GM12878 (cell line): ENCODE measurements at regions of chr11 and their contacts with region 1.

Region 1: DNA sequence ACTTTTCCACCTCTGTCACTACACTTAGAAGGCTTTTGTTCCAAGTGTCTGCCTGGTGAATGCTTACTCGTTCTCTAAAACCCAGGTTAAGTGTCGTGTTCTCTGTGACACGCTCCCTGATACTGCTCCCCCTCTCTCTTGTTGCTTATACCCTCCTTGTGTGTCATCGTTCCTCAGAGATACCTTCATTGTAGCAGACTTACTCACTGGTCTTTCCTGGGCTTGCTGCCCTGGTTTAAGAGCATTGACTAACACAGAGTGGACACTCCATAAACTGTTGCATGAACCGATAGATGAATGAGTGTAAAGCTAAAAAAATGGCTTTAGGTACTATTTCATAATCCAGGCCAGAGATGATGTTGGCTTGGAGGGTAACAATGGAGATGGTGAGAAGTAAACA is 171.3 kb downstream of the GRIK4 start:
- DNase-seq: no peak
- ATAC-seq: no peak
- H3K4me3 ChIP-seq: no peak overlapping the region
- H3K27ac ChIP-seq: no peak overlapping the region
- H3K4me1 ChIP-seq: no peaks in the 10 kb centered on the region; the same call in 1 of the 2 replicates
- H3K27me3 ChIP-seq: no peaks in the 10 kb centered on the region
- CTCF ChIP-seq: no peak
- EP300 ChIP-seq: no peak
- POLR2A ChIP-seq: no peak
- RAD21 ChIP-seq: no peak

Region 2: GRCh38 chr11:120511116-120511819 is 171.6 kb before region 1 on chr11 and contains the start of gene GRIK4:
- CTCF ChIA-PET with region 1: interaction called, 95 read pairs
- POLR2A ChIA-PET with region 1: no interaction called
- RAD21 ChIA-PET with region 1: interaction called, 64 read pairs
- SMC1A ChIA-PET with region 1: interaction called, 32 read pairs
- in situ Hi-C with region 1: loop called (anchors 10 kb)
- intact Hi-C with region 1: loop called (anchors 1 kb)
- DNase-seq: no peak
- ATAC-seq: peak; percentile 95
- H3K4me3 ChIP-seq: peak within 1 kb of the TSS; percentile 16; the same call in 1 of the 2 replicates
- H3K27ac ChIP-seq: no peak within 1 kb of the TSS
- H3K4me1 ChIP-seq: no peaks in the 10 kb centered on the region; the same call in 1 of the 2 replicates
- H3K27me3 ChIP-seq: no peaks in the 10 kb centered on the region
- CTCF ChIP-seq: peak; percentile 88 to 98 (median 92)
- EP300 ChIP-seq: no peak
- POLR2A ChIP-seq: no peak
- RAD21 ChIP-seq: peak; percentile 99
- polyA plus RNA-seq, gene GRIK4: 0.33 to 0.45 TPM

Region 3: DNA sequence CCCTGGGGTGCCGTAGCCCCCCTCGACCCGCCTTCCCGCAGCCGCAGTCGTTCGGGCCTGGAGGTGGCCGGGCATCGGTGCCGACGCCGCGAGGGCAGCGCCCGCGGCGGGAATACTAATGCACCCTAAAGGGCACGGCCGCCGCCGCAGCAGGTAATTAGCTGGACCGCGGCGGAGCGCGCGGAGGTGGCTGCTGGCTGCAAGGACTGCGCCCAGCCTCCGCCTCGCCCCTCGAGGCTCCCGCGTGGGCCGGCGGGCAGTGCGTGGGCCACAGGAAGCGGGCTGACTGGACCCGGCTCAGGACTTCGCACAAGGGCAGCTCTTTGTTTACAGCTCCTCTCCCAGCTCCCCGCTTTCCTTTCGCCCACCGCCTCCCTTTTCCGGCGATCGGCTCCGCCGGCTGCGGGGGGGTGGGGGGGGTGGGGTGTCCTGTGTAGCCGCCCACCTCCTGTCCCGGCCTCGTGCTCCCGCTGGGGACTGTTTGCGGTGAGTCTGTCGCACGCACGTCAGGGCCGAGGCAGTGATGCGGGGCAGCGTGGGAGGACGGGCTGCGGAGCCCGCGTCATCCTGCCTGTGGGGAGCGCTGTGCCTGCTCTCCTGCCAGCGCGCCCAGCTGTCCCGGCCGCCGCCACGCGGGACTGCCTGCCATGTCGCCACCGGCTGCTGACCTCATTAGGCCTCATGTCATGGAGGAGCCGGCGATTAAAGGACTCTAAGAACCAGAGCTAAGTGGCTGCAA is 118.1 kb before region 1 on chr11:
- CTCF ChIA-PET with region 1: interaction called, 38 read pairs
- POLR2A ChIA-PET with region 1: no interaction called
- RAD21 ChIA-PET with region 1: interaction called, 14 read pairs
- SMC1A ChIA-PET with region 1: interaction called, 11 read pairs
- in situ Hi-C with region 1: no loop called
- intact Hi-C with region 1: no loop called
- DNase-seq: peak; percentile 49
- ATAC-seq: peak; percentile 90
- H3K4me3 ChIP-seq: peak overlapping the region; percentile 47; the same call in 1 of the 2 replicates
- H3K27ac ChIP-seq: peak overlapping the region; percentile 35
- H3K4me1 ChIP-seq: peaks cover 18% of the 10 kb centered on the region
- H3K27me3 ChIP-seq: no peaks in the 10 kb centered on the region
- CTCF ChIP-seq: peak; percentile 21 to 44 (median 37); a peak in 3 of 6 replicates
- EP300 ChIP-seq: peak; percentile 85 to 94
- POLR2A ChIP-seq: no peak
- RAD21 ChIP-seq: peak; percentile 9; the same call in 1 of the 2 replicates

Region 4: GRCh38 chr11:120632579-120632978 is 50.3 kb before region 1 on chr11:
- CTCF ChIA-PET with region 1: interaction called, 36 read pairs
- POLR2A ChIA-PET with region 1: no interaction called
- RAD21 ChIA-PET with region 1: interaction called, 27 read pairs
- SMC1A ChIA-PET with region 1: interaction called, 33 read pairs
- in situ Hi-C with region 1: no loop called
- intact Hi-C with region 1: loop called (anchors 5 kb)
- DNase-seq: no peak
- ATAC-seq: peak; percentile 87
- H3K4me3 ChIP-seq: no peak overlapping the region
- H3K27ac ChIP-seq: no peak overlapping the region
- H3K4me1 ChIP-seq: peaks cover 10% of the 10 kb centered on the region
- H3K27me3 ChIP-seq: no peaks in the 10 kb centered on the region
- CTCF ChIP-seq: peak; percentile 16 to 64 (median 62)
- EP300 ChIP-seq: no peak
- POLR2A ChIP-seq: no peak
- RAD21 ChIP-seq: peak; percentile 60

Region 5: DNA sequence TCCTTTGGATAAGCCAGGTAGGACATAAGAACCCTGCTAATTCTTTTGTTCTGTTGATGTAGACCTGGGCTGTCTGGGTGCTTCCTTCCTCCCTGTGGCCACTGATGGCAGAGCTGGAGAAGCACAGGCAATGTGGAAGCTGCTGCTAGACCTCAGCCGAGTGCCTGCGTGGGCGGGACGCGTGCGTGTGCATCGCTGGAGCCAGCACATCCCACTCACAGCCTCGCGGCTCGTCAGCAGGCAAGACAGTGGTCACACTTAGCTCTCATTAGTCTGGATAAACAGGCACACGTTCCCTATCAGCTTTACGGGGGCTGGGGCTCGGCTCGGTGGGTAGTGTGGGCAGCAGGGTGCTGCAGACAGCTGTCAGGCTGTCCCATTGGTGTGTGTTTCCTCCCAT is 15.6 kb before region 1 on chr11:
- CTCF ChIA-PET with region 1: interaction called, 111 read pairs
- POLR2A ChIA-PET with region 1: no interaction called
- RAD21 ChIA-PET with region 1: interaction called, 9 read pairs
- SMC1A ChIA-PET with region 1: interaction called, 6 read pairs
- in situ Hi-C with region 1: no loop called
- intact Hi-C with region 1: no loop called
- DNase-seq: no peak
- ATAC-seq: no peak; the same call in 2 of the 3 replicates
- H3K4me3 ChIP-seq: no peak overlapping the region
- H3K27ac ChIP-seq: no peak overlapping the region
- H3K4me1 ChIP-seq: no peaks in the 10 kb centered on the region
- H3K27me3 ChIP-seq: no peaks in the 10 kb centered on the region; a peak in 1 of 4 replicates
- CTCF ChIP-seq: no peak
- EP300 ChIP-seq: no peak
- POLR2A ChIP-seq: no peak
- RAD21 ChIP-seq: no peak

Region 6: GRCh38 chr11:120710354-120711131 is 27.7 kb after region 1 on chr11:
- CTCF ChIA-PET with region 1: interaction called, 86 read pairs
- POLR2A ChIA-PET with region 1: no interaction called
- RAD21 ChIA-PET with region 1: interaction called, 13 read pairs
- SMC1A ChIA-PET with region 1: interaction called, 23 read pairs
- in situ Hi-C with region 1: no loop called
- intact Hi-C with region 1: no loop called
- DNase-seq: no peak
- ATAC-seq: peak; percentile 45
- H3K4me3 ChIP-seq: peak overlapping the region; percentile 12; the same call in 1 of the 2 replicates
- H3K27ac ChIP-seq: peak overlapping the region; percentile 63
- H3K4me1 ChIP-seq: peaks cover 47% of the 10 kb centered on the region
- H3K27me3 ChIP-seq: no peaks in the 10 kb centered on the region
- CTCF ChIP-seq: no peak
- EP300 ChIP-seq: no peak
- POLR2A ChIP-seq: no peak
- RAD21 ChIP-seq: no peak

Region 7: DNA sequence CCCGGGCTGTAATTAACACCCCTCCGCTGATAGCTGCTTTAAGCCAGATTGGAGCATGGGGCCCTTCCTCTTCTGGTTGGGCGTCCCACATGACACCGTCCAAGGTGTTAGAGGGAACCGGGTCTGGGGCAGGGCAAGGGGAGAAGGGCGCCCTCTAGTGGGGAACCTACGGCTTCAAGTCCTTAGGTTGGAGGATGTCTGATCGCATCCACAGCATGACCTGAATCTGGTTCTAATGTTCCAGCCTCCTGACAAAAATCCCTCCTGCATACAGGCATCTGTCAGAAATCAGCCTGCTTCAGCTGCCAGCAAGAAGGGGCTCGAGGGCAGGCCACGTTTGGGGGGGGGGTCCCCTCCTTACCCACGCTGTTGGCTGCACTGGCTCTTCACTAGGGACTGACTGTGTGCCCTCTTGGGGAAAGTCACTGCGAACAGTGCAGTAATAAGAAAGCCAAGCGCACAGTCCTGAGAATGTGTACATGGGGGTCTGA is 246.8 kb after region 1 on chr11:
- CTCF ChIA-PET with region 1: interaction called, 13 read pairs
- POLR2A ChIA-PET with region 1: no interaction called
- RAD21 ChIA-PET with region 1: interaction called, 11 read pairs
- SMC1A ChIA-PET with region 1: interaction called, 6 read pairs
- in situ Hi-C with region 1: no loop called
- intact Hi-C with region 1: no loop called
- DNase-seq: no peak
- ATAC-seq: peak; percentile 83
- H3K4me3 ChIP-seq: no peak overlapping the region
- H3K27ac ChIP-seq: no peak overlapping the region
- H3K4me1 ChIP-seq: peaks cover 18% of the 10 kb centered on the region
- H3K27me3 ChIP-seq: no peaks in the 10 kb centered on the region
- CTCF ChIP-seq: peak; percentile 72 to 89 (median 81)
- EP300 ChIP-seq: no peak
- POLR2A ChIP-seq: no peak
- RAD21 ChIP-seq: peak; percentile 58